ENCODE measurements at regions of chr20 and their contacts with region 1.

Region 1: GRCh38 chr20:51306503-51307358 is 235.8 kb downstream of the NFATC2 start:
- DNase-seq: peak; percentile 41
- H3K4me3 ChIP-seq: no peak overlapping the region
- H3K27ac ChIP-seq: no peak overlapping the region
- H3K4me1 ChIP-seq: no peaks in the 10 kb centered on the region
- H3K27me3 ChIP-seq: no peaks in the 10 kb centered on the region
- CTCF ChIP-seq: peak; percentile 74 to 94

Region 2: GRCh38 chr20:50992733-50993457 is 313.8 kb before region 1 on chr20:
- CTCF ChIA-PET with region 1: interaction called, 9 read pairs
- dilution Hi-C with region 1: no loop called
- in situ Hi-C with region 1: loop called (anchors 5 kb)
- intact Hi-C with region 1: loop called (anchors 1 kb)
- DNase-seq: peak; percentile 79
- H3K4me3 ChIP-seq: no peak overlapping the region
- H3K27ac ChIP-seq: peak overlapping the region; percentile 60
- H3K4me1 ChIP-seq: peaks cover 29% of the 10 kb centered on the region
- H3K27me3 ChIP-seq: no peaks in the 10 kb centered on the region
- CTCF ChIP-seq: peak; percentile 79 to 81

Region 3: DNA sequence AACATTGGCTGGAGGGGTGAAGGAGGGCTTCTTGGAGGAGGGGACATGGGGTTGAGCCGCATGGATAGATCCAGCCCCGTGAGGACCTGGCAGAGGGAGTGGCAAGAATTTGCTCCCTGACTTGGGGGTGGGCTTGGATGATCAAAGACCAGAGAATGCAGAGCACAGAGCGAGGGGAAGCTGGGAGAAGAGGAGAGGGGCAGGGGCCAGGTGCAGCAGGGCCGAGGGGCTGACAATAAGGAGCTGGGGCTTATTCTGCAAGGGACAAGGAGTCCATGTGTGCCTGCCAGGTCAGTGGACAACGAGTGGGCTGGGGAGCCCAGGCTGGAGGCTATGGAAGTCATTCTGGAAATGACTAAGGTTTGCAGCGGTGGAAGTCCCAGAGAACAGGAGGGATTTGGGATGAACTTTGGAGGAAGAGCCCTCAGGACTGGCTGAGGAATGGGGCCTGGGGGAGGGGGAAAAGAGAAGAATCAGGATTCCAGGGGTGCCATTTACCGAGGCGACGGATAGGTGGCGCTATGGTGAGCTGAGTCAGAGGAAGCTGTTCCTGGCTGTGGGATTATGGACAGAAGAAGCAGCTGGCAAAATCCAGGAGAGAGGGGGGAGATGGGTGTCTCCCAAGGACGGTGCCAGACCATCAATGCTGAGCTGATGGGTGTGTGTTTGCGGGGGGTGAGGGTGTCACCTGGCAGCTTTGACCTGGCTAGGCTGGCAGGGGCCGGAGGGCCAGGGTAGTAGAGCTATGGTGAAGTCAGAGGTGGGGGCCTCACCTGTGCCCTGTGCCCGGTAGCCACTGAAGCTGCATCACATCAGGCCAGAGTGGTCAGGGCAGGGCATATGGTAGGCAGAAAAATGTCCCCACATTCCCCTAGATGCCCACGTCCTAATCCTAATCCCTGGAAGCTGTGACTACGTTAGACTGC is 291.7 kb before region 1 on chr20:
- CTCF ChIA-PET with region 1: no interaction called
- dilution Hi-C with region 1: no loop called
- in situ Hi-C with region 1: no loop called
- intact Hi-C with region 1: loop called (anchors 1 kb)
- DNase-seq: peak; percentile 35
- H3K4me3 ChIP-seq: no peak overlapping the region
- H3K27ac ChIP-seq: no peak overlapping the region
- H3K4me1 ChIP-seq: peaks cover 2% of the 10 kb centered on the region
- H3K27me3 ChIP-seq: no peaks in the 10 kb centered on the region
- CTCF ChIP-seq: peak; percentile 91

Region 4: DNA sequence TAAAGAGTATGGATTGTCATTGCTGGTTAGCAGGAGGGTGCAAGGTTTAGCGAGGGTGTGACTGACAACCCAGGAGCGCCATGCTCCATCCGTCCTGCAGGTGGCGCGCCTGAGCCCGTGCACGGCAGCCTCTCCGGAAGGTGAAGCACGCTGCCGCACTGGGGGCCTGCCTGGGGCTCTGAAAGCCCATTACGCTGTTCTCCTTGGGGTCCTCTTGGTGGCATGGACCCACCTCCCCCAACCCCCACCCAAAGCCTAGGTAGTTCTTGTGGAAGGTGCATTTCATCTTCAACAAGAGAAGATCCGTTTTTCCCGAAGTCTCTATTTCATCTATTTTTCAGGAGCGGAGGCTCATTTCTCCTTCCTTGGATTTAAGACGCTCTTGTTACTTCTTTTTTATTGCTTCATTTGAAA is 86.4 kb before region 1 on chr20:
- CTCF ChIA-PET with region 1: no interaction called
- dilution Hi-C with region 1: no loop called
- in situ Hi-C with region 1: loop called (anchors 5 kb)
- intact Hi-C with region 1: loop called (anchors 1 kb)
- DNase-seq: no peak
- H3K4me3 ChIP-seq: no peak overlapping the region
- H3K27ac ChIP-seq: no peak overlapping the region
- H3K4me1 ChIP-seq: no peaks in the 10 kb centered on the region
- H3K27me3 ChIP-seq: no peaks in the 10 kb centered on the region
- CTCF ChIP-seq: peak; percentile 87 to 95

Measured in mammary epithelial cell (primary cell).